Posterior vena cava (tissue), 2 donors: ENCODE measurements at regions of chr16 and their contacts with region 1.

Region 1: GRCh38 chr16:15790458-15790857 is 66.4 kb downstream of the MYH11 start:
- DNase-seq: peak; percentile 54

Region 2: DNA sequence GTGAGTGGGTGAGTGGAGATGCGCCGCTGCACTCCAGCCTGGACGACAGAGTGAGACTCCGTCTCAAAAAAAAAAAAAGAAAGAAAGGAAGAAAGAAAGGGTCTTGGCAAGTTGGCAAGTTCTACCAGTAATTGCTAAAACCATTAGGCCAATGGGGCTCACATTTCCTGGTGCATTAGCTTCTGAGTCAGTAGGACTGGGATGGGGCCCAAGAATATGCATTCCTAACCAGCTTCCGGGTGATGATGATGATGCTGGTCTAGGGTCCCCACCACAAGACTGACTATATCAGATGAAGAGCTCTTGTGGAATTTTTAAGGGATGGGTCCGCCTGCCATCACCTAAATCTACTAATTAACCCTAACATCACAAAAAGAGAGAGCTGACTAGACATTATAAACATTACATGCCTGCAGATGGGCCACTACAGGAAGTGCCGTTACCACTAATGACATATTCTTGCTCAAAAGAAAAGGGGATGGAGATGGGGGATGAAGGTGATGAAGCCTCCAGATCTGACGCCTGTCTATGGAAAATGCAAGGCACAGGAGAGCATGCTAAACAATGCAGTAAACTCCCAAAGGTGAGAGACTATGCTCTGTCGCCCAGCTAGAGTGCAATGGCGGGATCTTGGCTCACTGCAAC is 53.3 kb after region 1 on chr16:
- intact Hi-C with region 1: loop called in 1 of 2 experiments (anchors 10 kb)
- DNase-seq: no peak

Region 3: GRCh38 chr16:15952265-15952711 is 161.8 kb after region 1 on chr16:
- intact Hi-C with region 1: no loop called
- DNase-seq: no peak